Panc1 (cell line): ENCODE measurements at regions of chrX and their contacts with region 1.

Region 1: DNA sequence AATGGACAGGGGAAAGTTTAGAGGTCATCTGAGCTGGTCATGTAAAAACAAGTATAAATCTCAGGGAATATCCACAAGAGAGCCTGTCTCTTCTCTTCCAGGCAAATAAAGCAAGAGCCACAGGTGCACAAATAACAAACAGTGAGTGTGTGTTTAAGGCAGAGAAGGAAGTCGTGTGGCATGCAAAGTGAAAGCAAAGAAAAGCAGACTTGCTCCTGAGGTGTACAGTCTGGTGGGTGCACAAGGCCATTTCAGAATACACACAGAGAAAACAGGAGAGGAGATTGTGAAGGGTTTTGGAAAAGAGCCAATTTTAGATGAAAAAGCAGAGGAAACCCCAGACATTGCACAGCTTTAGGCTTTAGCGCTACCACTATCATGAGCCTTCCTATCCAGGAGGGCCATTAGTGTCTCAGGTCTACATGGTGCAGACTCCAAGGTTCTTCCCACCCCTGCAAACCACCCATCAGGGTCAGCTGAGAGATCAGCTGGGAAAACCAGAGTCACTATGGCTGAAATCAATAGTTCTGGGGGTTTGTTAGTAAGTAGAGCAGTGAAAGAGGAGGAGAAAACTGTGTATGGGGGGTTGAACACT is 355.8 kb downstream of the KLHL4 start:
- DNase-seq: no peak
- ATAC-seq: no peak
- H3K4me3 ChIP-seq: no peak overlapping the region
- H3K27ac ChIP-seq: no peak overlapping the region
- H3K4me1 ChIP-seq: no peaks in the 10 kb centered on the region
- H3K27me3 ChIP-seq: no peaks in the 10 kb centered on the region
- CTCF ChIP-seq: no peak

Region 2: DNA sequence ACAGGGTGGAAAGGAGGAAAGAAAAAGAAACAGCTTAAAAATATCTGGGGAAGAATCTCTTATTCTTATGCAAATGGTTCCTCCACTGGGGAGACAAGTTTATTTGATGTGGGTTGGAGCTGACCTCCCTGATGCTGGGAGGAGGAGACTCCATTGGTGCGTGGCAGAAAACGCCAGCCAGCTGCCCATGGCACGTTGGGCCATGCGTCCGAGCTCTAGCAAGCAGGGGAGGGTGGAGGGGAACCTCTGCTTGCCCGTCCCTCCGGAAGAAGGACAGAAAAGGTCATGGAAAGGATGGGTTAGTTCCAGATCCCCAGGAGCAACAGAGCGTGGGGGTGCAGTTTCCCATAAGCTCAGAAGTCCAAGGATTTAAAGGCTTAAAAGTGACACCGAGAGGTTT is 145.4 kb before region 1 on chrX:
- CTCF ChIA-PET with region 1: no interaction called
- POLR2A ChIA-PET with region 1: no interaction called
- in situ Hi-C with region 1: no loop called
- intact Hi-C with region 1: no loop called
- DNase-seq: no peak
- ATAC-seq: no peak
- H3K4me3 ChIP-seq: no peak overlapping the region; a peak in 1 of 4 replicates
- H3K27ac ChIP-seq: no peak overlapping the region
- H3K4me1 ChIP-seq: no peaks in the 10 kb centered on the region
- H3K27me3 ChIP-seq: no peaks in the 10 kb centered on the region
- CTCF ChIP-seq: no peak

Region 3: GRCh38 chrX:87900320-87900908 is 27.0 kb after region 1 on chrX:
- CTCF ChIA-PET with region 1: no interaction called
- POLR2A ChIA-PET with region 1: no interaction called
- in situ Hi-C with region 1: no loop called
- intact Hi-C with region 1: no loop called
- DNase-seq: no peak
- ATAC-seq: no peak
- H3K4me3 ChIP-seq: peak overlapping the region; percentile 7 to 25; a peak in 3 of 4 replicates
- H3K27ac ChIP-seq: no peak overlapping the region
- H3K4me1 ChIP-seq: no peaks in the 10 kb centered on the region
- H3K27me3 ChIP-seq: no peaks in the 10 kb centered on the region
- CTCF ChIP-seq: no peak

Region 4: DNA sequence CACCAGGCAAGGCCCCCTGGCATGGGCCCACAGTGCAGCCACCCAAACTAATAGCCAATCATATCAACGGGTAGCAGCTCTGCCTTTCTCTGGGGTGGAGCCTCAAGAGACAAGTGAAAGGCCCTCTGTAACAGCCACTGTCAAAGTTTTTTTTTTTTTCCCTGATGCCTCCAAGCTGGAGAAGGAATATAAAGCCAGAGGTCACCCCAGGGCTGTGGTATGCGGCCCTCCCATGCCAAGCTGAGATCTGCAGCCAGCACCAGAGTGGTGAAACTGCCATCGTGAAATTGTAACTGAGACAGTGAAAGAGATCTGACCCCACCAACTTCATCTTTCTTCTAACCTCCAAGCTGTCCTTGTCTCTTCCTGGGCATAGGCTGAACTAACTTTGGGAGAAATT is 51.2 kb after region 1 on chrX:
- CTCF ChIA-PET with region 1: no interaction called
- POLR2A ChIA-PET with region 1: no interaction called
- in situ Hi-C with region 1: no loop called
- intact Hi-C with region 1: loop called (anchors 10 kb)
- DNase-seq: no peak
- ATAC-seq: no peak
- H3K4me3 ChIP-seq: no peak overlapping the region
- H3K27ac ChIP-seq: no peak overlapping the region
- H3K4me1 ChIP-seq: no peaks in the 10 kb centered on the region
- H3K27me3 ChIP-seq: no peaks in the 10 kb centered on the region
- CTCF ChIP-seq: no peak